PC-3 (cell line): ENCODE measurements at regions of chr1 and their contacts with region 1.

Region 1: DNA sequence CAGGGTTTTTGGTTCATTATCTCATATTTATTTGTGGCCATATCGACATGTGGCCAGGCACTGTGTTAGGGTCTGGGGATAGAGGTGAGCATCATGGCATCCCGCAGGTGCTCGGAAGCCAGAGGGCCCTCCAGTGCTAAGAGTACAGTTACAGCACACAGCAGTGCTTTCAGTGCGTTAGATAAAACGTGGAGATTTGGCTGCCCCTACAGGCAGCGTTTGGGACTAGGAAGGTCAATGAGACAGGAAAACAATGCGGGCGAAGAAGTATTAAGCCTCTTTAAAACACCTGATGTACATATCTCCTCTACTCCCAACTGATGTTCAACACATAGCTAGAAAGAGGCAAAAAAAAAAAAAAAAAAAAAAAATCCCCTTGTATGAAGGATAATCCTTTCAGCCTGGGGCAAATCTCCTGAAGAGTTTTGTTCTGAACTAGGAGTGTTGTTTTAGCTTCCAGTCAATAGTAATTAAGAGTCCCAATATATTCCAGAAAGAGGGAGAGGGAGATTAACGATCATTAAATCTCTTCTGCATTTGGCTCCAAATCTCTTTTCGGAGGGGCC is 80.1 kb downstream of the CAPZB start:
- DNase-seq: no peak
- ATAC-seq: no peak
- H3K4me3 ChIP-seq: no peak overlapping the region
- H3K27ac ChIP-seq: no peak overlapping the region
- H3K4me1 ChIP-seq: no peaks in the 10 kb centered on the region
- H3K27me3 ChIP-seq: no peaks in the 10 kb centered on the region
- CTCF ChIP-seq: 0 out of 2 replicates have a peak, but pooled peaks have one; percentile 24

Region 2: GRCh38 chr1:19495799-19496624 is 90.7 kb after region 1 on chr1:
- CTCF ChIA-PET with region 1: no interaction called
- POLR2A ChIA-PET with region 1: interaction called, 17 read pairs
- intact Hi-C with region 1: no loop called
- DNase-seq: no peak
- ATAC-seq: no peak
- H3K4me3 ChIP-seq: no peak overlapping the region
- H3K27ac ChIP-seq: no peak overlapping the region
- H3K4me1 ChIP-seq: no peaks in the 10 kb centered on the region
- H3K27me3 ChIP-seq: no peaks in the 10 kb centered on the region
- CTCF ChIP-seq: no peak

Region 3: DNA sequence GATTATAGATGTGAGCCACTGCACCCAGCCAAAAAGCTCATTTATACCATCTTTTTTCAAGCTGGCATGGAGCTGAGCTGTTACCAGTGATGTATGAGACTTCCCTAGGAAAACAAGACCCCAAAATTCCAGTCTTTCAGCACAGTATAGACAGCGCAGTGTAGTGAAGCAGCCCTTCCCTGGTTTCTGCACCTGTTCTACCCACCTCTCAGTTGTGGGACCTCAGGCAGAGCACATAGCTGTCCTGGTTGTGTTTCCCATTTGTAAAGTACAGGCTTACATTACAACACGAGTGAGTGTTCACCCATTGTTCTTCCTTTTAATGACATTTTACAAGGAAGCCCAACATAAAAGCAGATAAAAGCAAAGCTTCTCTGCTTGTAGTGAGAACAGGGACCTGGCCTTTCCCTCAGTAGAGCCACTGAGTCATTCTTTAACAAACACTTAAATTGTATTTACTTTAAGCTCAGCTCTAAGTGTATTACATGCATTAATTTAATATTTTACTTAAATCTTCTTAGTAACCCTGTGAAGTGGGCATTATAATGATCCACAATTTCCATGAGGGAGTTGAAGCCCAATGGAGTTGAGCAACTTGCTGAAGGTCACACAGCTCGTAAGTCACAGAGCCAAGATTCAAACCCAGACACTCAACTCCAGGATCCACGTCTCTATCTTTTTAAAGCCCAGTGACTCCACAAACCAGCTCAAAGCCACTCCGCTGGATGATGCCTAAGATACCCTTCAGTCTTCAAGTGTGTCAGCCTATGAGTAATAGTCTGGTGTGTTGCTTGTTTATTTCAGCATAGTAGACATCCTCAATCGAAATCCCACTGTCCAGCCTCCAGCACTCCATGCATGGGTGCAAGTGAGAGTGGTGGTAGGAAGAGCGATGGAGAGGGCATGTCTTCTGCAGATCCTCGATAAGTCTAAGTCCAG is 120.6 kb after region 1 on chr1:
- CTCF ChIA-PET with region 1: no interaction called
- POLR2A ChIA-PET with region 1: no interaction called
- intact Hi-C with region 1: no loop called
- DNase-seq: peak; percentile 66
- ATAC-seq: peak; percentile 97
- H3K4me3 ChIP-seq: no peak overlapping the region
- H3K27ac ChIP-seq: peak overlapping the region; percentile 70
- H3K4me1 ChIP-seq: peaks cover 18% of the 10 kb centered on the region
- H3K27me3 ChIP-seq: no peaks in the 10 kb centered on the region
- CTCF ChIP-seq: no peak